ENCODE measurements at regions of chr5 and their contacts with region 1.

Region 1: GRCh38 chr5:109345699-109346098 is 64.1 kb downstream of the PJA2 start:
- DNase-seq: no peak
- ATAC-seq: no peak
- H3K4me3 Mint-ChIP-seq: no peak overlapping the region
- H3K27ac Mint-ChIP-seq: no peak overlapping the region
- H3K4me1 Mint-ChIP-seq: peaks cover 14% of the 10 kb centered on the region
- H3K27me3 Mint-ChIP-seq: no peaks in the 10 kb centered on the region

Region 2: DNA sequence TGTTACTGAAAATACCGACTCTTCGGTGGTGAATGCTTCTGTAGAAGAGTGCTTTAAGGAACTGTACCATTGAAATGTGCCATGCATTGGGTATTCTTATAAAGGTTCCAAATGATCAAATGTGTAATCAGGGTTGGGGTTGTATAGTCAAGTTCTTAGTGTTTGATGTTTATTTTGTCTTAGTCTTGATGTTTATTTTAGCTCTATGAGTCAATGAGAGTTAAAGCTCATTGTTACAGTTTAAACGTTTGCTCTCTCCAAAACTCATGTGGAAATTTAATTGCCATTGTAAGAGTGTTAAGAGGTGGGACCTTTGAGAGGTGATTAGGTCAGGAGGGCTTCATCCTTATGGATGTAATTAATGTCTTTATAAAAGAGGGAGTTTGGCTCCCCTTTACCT is 445.0 kb before region 1 on chr5:
- CTCF ChIA-PET with region 1: no interaction called
- POLR2A ChIA-PET with region 1: interaction called, 11 read pairs
- intact Hi-C with region 1: no loop called
- DNase-seq: no peak
- ATAC-seq: no peak
- H3K4me3 Mint-ChIP-seq: no peak overlapping the region
- H3K27ac Mint-ChIP-seq: no peak overlapping the region
- H3K4me1 Mint-ChIP-seq: no peaks in the 10 kb centered on the region
- H3K27me3 Mint-ChIP-seq: no peaks in the 10 kb centered on the region